ENCODE measurements at regions of chr12 and their contacts with region 1.

Region 1: DNA sequence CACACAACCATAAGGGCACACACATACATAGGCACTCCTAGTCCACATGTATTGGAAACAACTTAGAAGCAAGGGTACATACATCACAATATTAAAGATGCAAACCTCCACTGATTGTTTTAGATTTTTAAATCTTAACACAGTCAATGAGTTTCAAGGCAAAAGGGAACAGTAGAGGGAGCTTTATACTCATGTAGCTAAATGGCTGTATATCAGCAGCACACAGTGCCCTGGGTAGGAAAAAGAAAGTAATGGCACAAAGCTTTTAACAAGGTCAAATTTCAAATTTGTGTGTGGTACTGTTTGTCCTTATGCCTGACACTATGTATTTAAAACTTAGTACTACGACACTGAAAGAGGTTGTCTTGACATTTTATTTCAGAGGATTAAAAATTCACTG is 262.0 kb downstream of the MED13L start:
- DNase-seq: no peak
- ATAC-seq: peak; percentile 48
- H3K4me3 Mint-ChIP-seq: no peak overlapping the region
- H3K27ac Mint-ChIP-seq: no peak overlapping the region
- H3K4me1 Mint-ChIP-seq: peaks cover 9% of the 10 kb centered on the region
- H3K27me3 Mint-ChIP-seq: no peaks in the 10 kb centered on the region
- CTCF ChIP-seq: no peak

Region 2: DNA sequence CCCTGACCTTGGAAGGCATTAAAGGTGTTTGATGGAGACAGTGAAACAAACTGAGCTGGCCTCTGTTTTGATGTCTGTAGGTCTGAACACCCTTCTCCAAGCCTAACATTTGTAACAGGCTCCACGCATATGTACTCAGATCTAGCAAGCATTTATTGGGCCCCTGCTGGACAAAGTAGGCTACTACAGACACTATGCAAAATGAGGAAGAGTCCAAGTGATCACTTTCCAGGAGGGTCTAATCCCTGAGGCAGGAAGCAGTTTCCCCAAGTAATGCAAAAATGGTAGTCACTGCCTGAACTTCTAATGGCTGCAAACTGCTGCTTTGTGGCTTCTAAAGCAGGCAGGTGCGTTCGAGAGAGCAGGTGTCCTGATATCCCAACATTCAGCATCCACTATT is 143.8 kb before region 1 on chr12:
- CTCF ChIA-PET with region 1: no interaction called
- POLR2A ChIA-PET with region 1: no interaction called
- DNase-seq: peak; percentile 33
- ATAC-seq: peak; percentile 86
- H3K4me3 Mint-ChIP-seq: no peak overlapping the region
- H3K27ac Mint-ChIP-seq: peak overlapping the region; percentile 98
- H3K4me1 Mint-ChIP-seq: peaks cover 51% of the 10 kb centered on the region
- H3K27me3 Mint-ChIP-seq: no peaks in the 10 kb centered on the region
- CTCF ChIP-seq: peak; percentile 80

Region 3: GRCh38 chr12:116236148-116236731 is 220.7 kb after region 1 on chr12:
- CTCF ChIA-PET with region 1: interaction called, 10 read pairs
- POLR2A ChIA-PET with region 1: no interaction called
- DNase-seq: peak; percentile 25
- ATAC-seq: peak; percentile 56; the same call in 1 of the 2 replicates
- H3K4me3 Mint-ChIP-seq: no peak overlapping the region
- H3K27ac Mint-ChIP-seq: no peak overlapping the region
- H3K4me1 Mint-ChIP-seq: peaks cover 18% of the 10 kb centered on the region
- H3K27me3 Mint-ChIP-seq: no peaks in the 10 kb centered on the region
- CTCF ChIP-seq: no peak